ENCODE measurements at regions of chrX and their contacts with region 1.

Region 1: DNA sequence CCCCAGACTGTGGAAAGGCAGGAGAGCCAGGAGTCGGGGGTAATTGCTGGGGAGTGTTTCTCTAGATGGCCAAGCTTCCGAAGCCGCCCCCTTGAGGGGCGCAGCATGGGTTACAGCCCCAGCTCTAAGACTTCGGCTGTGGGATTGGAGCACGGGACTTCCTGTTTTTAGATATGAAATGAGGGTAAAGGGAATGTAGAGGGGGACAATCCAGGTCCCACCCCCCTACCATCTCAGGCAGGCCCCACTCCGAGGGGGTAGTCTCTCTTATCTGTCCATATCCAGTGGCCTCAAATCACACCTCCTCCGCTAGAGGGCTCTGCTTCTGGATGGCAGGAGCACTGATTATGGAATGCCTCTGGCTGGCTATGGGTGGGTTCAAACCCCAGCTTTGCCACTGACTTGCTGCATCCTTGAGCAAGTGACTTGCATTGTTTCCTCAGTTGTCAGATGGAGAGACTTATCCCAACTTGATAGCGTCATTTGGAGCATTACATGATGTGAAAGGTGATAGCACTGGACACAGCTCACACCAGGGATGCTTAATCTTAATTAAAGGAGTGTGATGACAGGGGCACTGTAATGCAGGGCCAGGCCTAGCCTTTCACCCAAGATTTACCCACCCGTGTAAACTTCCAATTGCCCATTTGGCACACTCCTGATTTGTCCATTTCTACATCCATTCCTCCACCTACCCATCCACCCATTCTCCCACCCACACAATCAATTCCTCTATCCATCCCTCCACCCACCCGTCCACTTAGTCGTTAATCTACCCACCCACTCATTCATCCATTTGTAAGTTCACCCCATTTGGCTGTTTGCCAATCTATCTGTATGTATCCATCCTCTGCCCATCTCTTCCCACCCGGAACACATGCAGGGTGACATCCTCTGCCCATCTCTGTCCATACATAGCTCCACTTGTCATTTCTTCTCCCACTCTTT is 850 bp upstream of the KCND1 start:
- DNase-seq: peak; percentile 53
- H3K4me3 ChIP-seq: peak overlapping the region; percentile 9
- H3K27ac ChIP-seq: no peak overlapping the region
- H3K4me1 ChIP-seq: no peaks in the 10 kb centered on the region
- H3K27me3 ChIP-seq: no peaks in the 10 kb centered on the region
- CTCF ChIP-seq: peak; percentile 42

Region 2: DNA sequence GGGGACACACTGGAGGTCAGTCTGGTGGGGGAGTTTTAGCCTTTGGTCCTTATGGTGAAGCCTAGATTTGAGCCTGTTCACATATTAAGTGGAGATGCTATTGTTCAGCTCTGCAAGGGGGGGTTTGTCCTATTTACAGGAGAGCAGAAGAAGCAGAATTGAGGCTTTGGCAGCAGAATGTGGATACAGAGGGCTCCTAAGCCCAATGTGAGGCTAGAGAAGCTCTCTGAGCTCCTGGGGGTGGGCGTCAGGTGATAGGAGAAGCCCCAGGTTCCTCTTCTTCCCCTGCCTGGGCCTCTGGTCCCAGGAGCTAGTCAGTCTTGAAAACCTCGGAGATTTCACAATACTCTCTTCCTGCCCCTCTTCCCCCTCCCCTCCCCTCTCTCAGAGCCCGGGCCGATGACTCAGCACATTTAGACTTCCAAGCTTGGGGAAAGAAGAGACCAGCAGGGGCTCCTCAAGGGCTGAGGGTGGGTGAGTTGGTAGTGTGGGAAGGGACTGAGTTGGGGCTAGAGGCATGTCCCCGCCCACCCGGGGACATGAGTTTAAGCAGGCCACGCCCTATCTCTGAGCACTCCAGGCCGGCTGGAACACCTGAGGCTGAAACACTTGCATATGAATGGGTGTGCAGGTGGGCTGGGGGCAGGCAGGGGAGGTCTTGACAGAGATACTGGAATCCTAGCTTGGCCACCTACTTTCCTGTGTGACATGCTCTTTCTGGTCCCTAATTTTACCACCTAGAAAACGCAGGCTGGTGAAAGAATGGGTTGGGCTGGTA is 67.3 kb after region 1 on chrX:
- intact Hi-C with region 1: loop called (anchors 5 kb)
- DNase-seq: peak; percentile 52
- H3K4me3 ChIP-seq: no peak overlapping the region
- H3K27ac ChIP-seq: peak overlapping the region; percentile 63
- H3K4me1 ChIP-seq: no peaks in the 10 kb centered on the region
- H3K27me3 ChIP-seq: no peaks in the 10 kb centered on the region
- CTCF ChIP-seq: no peak

Measured in colonic mucosa (tissue), 4 donors.